Activated T-helper 2 cell treated with anti-CD3 and anti-CD28 coated beads, Interferon-gamma antibody, Interleukin-2, Interleukin-4, amounts not matched to agents 10 μg/mL and 5 μg/mL and 100 μg/mL, durations not matched to agents 14 hours and 24 hours and 36 hours (primary cell): ENCODE measurements at regions of chr10 and their contacts with region 1.

Region 1: GRCh38 chr10:80498833-80499741 is 38.6 kb upstream of the SH2D4B start:
- DNase-seq: peak; percentile 24
- H3K4me3 Mint-ChIP-seq: peak overlapping the region; percentile 55
- H3K27ac Mint-ChIP-seq: peak overlapping the region; percentile 90
- H3K4me1 Mint-ChIP-seq: peaks cover 83% of the 10 kb centered on the region
- H3K27me3 Mint-ChIP-seq: no peaks in the 10 kb centered on the region

Region 2: DNA sequence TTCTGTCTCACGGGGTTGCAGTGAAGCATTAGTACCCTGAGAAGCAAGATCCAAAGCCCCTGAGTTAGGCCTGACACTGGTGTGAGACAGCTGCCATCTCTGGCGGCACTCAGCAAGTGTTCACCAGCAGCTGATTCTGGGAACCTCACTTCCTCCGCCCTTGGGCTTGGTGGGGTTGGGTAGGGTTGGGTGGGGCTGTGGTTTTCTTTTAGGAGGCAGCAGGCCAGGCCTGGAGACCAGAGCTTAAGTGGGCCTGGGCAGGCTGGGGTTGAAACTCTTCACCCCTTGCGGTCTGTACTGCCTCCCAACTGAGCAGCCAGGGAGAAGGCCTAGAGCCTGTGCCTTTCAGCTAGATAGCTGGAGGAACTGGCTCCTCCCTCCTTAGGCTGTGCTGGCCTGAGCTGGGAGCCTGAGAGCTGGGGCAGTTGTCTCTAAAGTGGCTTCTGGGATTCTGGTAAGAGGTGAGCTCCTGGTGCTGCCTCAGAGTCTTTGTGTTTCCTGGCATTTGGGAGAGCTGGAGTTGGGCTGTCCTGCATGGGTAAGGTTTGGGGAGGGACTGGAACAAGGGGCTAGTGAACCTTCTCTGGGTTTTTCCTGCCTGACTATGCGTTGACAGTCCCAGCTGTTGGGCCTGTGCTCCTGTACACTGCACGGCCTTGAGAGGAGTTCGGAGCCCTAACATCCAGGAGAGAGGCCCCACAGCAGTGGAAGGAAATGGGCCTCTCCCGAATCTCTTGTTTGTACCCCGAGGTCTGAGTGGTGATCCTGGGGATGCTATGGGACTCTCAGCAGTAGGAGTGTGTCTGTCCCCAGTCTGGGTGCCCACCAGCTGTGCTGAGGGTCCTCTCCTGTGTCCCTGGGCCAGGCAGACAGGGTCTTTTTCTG is 39.8 kb before region 1 on chr10:
- intact Hi-C with region 1: loop called (anchors 2 kb)
- DNase-seq: peak; percentile 62
- H3K4me3 Mint-ChIP-seq: peak overlapping the region; percentile 72
- H3K27ac Mint-ChIP-seq: peak overlapping the region; percentile 80
- H3K4me1 Mint-ChIP-seq: peaks cover 78% of the 10 kb centered on the region
- H3K27me3 Mint-ChIP-seq: no peaks in the 10 kb centered on the region

Region 3: GRCh38 chr10:80485950-80486764 is 12.9 kb before region 1 on chr10:
- intact Hi-C with region 1: loop called (anchors 2 kb)
- DNase-seq: no peak
- H3K4me3 Mint-ChIP-seq: peak overlapping the region; percentile 54
- H3K27ac Mint-ChIP-seq: peak overlapping the region; percentile 93
- H3K4me1 Mint-ChIP-seq: peaks cover 81% of the 10 kb centered on the region
- H3K27me3 Mint-ChIP-seq: no peaks in the 10 kb centered on the region

Region 4: DNA sequence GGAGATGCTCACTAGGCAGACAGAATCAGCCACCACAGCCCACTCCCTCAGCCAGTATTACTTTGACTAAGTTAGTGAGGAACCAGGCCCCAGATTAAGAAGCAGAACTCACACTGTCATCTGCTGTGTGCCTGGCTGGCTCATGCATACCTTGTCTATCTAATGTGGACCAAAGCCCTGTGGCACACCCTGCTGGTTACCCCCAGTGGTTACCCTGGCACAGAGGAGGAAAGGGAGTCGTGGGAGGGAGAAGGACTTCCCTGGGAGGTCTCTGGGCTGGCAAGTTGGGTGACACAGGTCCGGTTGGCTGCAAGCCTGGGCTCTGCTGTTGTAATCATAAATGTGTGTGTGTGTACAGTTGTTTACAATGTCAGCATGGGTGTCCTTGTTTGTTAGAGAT is 31.2 kb after region 1 on chr10:
- intact Hi-C with region 1: no loop called
- DNase-seq: no peak
- H3K4me3 Mint-ChIP-seq: peak overlapping the region; percentile 34
- H3K27ac Mint-ChIP-seq: peak overlapping the region; percentile 79
- H3K4me1 Mint-ChIP-seq: peaks cover 57% of the 10 kb centered on the region
- H3K27me3 Mint-ChIP-seq: no peaks in the 10 kb centered on the region